HEK293 (cell line): ENCODE measurements at regions of chr6 and their contacts with region 1.

Region 1: DNA sequence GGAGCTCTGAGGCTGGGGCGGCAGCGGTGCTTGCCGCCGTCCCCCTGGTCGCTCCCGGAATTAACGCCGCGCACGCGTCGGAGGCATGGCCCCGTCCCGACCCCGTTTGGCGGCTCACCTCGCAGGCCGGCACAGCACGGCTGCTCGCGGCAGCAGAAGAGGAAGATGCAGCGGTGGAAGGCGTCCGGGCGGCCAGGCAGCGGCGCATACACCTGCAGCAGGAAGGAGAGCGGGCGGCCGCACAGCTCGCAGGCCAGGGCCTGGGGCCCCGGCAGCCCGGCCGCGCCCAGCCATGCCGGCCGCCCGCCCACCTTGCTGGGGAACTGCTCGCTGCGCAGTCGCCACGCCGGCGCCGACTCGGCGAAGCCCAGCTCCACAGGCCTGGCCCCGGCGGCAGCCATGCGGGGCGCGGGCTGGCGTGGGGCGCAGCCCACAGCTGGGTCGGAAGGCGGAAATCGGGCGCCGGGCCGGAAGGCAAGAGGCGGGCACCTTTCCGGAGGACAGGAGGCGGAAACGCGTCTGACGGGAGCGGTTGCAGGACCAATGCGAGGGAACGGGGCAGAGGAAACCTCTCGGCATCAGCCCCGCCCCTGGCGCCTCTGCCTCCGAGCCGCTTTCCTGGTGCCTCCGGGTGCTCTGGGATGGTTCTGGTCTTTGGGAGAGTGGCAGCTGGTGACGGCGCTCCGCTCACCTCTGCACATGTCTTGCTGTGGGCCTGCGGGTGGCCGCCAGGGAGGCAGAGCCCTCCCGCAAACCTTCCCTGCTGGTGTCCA is at the start of gene PDCD2:
- H3K4me3 ChIP-seq: peak within 1 kb of the TSS; percentile 99
- H3K27ac ChIP-seq: peak within 1 kb of the TSS; percentile 74
- H3K4me1 ChIP-seq: no peaks in the 10 kb centered on the region
- CTCF ChIP-seq: peak; percentile 41; the same call in 1 of the 2 replicates

Region 2: DNA sequence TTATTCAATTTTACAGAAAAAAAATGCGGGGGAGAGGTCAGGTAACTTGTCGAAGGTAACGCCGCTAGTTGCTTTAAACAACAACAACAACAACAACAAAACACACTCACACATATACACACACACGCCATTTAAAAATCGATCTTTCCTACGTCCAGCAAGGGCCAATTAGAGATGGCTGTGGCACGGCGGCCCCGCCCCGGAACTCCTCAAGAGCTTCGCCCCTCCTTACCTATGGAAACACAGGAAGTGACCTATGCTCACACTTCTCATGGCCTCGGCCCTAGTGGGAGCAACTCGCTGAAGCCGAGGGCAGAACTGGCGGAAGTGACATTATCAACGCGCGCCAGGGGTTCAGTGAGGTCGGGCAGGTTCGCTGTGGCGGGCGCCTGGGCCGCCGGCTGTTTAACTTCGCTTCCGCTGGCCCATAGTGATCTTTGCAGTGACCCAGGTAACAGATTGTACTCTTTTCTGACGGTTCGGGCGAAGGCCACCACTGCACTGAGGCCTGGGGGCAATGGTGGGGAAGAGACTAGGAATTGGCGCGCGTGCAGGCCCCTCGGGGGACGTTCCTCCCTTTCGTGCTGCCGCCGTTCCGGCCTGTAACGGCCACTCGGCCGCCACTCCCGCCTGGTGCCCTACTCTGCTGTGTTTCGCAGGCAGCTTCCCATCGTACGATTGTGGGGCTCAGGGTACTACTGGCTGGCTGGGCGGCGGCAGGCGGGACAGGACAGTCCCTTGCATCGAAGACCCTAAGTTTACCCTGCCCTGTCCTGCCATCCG is 30.2 kb before region 1 on chr6 and contains the start of gene TBP:
- CTCF ChIA-PET with region 1: no interaction called
- POLR2A ChIA-PET with region 1: interaction called, 16 read pairs
- H3K4me3 ChIP-seq: peak within 1 kb of the TSS; percentile 98
- H3K27ac ChIP-seq: peak within 1 kb of the TSS; percentile 66
- H3K4me1 ChIP-seq: peaks cover 9% of the 10 kb centered on the region
- CTCF ChIP-seq: no peak